AG04449 (cell line): ENCODE measurements at regions of chr10 and their contacts with region 1.

Region 1: GRCh38 chr10:47311932-47312662 is 10.2 kb upstream of the GDF2 start:
- DNase-seq: peak; percentile 12
- H3K4me3 ChIP-seq: no peak overlapping the region
- CTCF ChIP-seq: peak; percentile 98

Region 2: DNA sequence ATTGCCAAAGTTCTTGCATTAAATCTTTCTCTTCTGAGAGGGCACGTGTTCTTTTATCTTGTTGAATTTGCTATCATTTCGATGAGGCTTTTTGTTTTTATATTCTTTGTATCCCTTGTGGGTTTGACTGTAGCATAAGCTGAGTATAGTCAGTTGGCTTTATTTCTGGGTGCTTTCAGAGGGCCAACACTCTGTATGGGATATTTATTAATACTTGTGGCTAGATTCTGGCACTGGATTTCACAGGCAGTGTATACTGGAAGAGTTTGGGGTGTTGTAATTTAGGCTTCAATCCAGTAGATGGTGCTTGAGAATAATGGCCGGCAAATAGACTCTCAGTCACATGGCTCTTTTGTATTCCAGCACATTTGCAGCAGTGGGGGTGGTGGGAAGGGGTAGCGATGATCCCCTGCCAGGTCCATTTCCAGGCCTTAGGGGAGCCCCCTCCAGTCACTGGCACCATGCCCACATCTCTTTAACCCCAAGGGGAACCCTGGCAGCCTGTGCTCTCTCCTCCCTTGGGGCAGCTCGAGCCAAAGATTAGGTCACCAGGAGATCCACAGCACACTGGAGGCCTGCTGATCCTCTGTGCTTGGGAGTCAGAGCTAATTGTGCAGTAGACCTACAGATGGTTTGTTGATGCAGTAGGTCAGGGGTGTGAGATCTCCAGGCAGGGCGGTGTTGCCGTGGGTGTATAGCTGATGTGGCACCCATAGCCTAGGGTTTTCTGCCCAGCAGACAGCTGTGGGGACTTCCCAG is 319.1 kb before region 1 on chr10:
- CTCF ChIA-PET with region 1: interaction called, 98 read pairs
- POLR2A ChIA-PET with region 1: no interaction called
- DNase-seq: no peak
- H3K4me3 ChIP-seq: no peak overlapping the region
- CTCF ChIP-seq: peak; percentile 41

Region 3: DNA sequence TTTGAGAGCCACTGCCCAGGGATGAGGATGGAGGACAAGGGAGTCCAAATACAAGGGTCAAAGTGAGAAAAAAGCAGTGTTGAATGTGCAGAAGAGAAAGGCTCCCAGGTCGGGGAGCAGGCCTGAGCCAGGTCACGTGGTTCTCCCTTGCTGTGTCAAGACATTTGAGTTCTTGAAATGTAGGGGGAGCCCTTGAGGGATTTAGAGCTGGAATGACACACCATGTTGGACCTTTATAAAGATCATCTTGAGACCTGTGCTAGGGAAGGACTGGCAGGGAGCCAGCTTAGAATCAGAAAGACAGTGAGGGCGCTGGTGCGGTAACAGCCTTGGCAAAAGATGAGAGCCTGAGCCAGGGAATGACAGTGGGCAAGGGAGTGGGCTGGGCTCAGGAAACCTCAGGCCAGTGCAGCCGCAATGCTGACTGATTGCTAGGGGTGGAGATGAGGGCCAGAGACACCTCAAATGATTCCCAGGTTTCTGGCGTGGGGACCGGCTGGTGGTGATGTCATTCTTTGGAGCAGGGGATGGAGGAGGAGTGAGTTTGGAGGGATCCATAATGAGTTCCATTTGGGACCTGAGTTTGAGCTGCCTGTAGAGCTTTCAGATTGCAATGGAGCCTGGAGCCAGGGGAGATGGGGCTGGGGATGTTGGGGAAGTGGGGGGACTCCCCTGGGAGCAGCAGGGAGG is 280.7 kb before region 1 on chr10:
- CTCF ChIA-PET with region 1: interaction called, 81 read pairs
- POLR2A ChIA-PET with region 1: no interaction called
- DNase-seq: no peak
- H3K4me3 ChIP-seq: no peak overlapping the region
- CTCF ChIP-seq: no peak

Region 4: DNA sequence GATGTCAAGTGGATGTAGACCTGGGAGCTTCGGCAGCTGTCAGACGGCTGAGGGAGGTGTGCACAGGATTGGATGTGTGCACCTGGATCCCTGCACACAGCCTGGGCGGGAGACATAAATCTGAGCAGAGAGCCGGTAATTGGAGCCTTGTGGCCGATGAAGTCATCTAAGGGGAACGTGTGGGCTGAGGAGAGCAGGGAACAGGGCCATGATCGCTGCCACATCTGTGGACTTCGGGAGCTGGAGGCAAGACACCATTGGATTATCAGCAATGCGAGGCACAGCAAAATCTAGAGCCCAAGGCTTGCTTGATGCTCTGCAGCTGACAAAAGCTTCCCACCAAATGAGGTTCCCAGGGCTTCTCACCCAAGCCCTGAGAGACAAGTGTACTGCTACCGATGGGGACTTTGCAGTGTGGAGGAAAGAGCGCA is 253.1 kb before region 1 on chr10:
- CTCF ChIA-PET with region 1: interaction called, 18 read pairs
- POLR2A ChIA-PET with region 1: no interaction called
- DNase-seq: no peak
- H3K4me3 ChIP-seq: no peak overlapping the region
- CTCF ChIP-seq: no peak

Region 5: GRCh38 chr10:47231414-47231813 is 80.7 kb before region 1 on chr10:
- CTCF ChIA-PET with region 1: no interaction called
- POLR2A ChIA-PET with region 1: no interaction called
- DNase-seq: no peak
- H3K4me3 ChIP-seq: no peak overlapping the region
- CTCF ChIP-seq: no peak

Region 6: GRCh38 chr10:47326306-47326926 is 14.3 kb after region 1 on chr10:
- CTCF ChIA-PET with region 1: interaction called, 48 read pairs
- POLR2A ChIA-PET with region 1: no interaction called
- DNase-seq: no peak
- H3K4me3 ChIP-seq: no peak overlapping the region
- CTCF ChIP-seq: no peak